Posterior vena cava (tissue), 2 donors: ENCODE measurements at regions of chr4 and their contacts with region 1.

Region 1: DNA sequence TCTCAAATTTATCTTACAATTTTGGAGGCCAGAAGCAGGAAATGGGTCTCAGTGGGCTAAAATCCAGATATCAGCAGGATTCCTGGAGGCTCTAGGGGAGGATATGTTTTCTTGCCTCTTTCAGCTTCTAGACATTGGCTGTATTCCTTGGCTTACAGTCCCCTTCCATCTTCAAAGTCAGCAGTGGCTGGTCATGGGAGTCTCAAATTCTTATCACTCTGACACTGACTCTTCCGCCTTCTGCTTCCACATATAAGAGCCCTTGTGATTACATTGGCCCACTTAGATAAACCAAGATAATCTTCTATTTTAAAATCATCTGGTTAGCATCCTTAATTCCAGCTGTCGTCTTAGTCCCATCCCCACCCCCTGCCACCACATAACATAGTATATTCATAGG is 113.0 kb downstream of the PCDH7 start:
- DNase-seq: no peak

Region 2: DNA sequence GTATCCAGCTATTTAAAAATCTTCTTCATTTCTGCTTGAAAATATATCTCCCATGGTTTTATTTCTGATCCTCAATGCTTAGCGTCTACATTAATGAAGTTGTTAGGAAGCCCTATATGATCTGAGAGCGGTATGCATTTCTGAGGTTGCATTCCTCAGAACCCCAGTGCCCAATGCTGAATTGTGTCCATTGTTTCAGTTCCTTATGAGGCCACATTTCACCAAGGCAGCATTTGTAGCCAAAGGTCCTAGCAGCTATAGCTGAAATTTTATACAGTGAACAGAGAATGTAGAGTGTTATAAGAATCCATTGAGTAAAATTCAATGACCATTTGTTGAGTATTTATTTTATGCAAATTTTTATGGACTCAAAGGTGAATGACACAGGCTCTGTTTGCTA is 96.4 kb after region 1 on chr4:
- intact Hi-C with region 1: loop called in 1 of 2 experiments (anchors 5 kb)
- DNase-seq: no peak

Region 3: GRCh38 chr4:31408121-31408520 is 574.9 kb after region 1 on chr4:
- intact Hi-C with region 1: no loop called
- DNase-seq: no peak